ENCODE measurements at regions of chr16 and their contacts with region 1.

Region 1: GRCh38 chr16:74320707-74321106 is 24.1 kb downstream of the PSMD7 start:
- DNase-seq: no peak
- H3K4me3 ChIP-seq: no peak overlapping the region
- H3K27ac ChIP-seq: no peak overlapping the region
- H3K4me1 ChIP-seq: no peaks in the 10 kb centered on the region
- H3K27me3 ChIP-seq: no peaks in the 10 kb centered on the region
- CTCF ChIP-seq: no peak

Region 2: GRCh38 chr16:73831220-73831619 is 489.5 kb before region 1 on chr16:
- CTCF ChIA-PET with region 1: no interaction called
- POLR2A ChIA-PET with region 1: no interaction called
- intact Hi-C with region 1: no loop called
- DNase-seq: no peak
- H3K4me3 ChIP-seq: no peak overlapping the region
- H3K27ac ChIP-seq: no peak overlapping the region
- H3K4me1 ChIP-seq: no peaks in the 10 kb centered on the region
- H3K27me3 ChIP-seq: peaks cover 27% of the 10 kb centered on the region
- CTCF ChIP-seq: no peak

Region 3: DNA sequence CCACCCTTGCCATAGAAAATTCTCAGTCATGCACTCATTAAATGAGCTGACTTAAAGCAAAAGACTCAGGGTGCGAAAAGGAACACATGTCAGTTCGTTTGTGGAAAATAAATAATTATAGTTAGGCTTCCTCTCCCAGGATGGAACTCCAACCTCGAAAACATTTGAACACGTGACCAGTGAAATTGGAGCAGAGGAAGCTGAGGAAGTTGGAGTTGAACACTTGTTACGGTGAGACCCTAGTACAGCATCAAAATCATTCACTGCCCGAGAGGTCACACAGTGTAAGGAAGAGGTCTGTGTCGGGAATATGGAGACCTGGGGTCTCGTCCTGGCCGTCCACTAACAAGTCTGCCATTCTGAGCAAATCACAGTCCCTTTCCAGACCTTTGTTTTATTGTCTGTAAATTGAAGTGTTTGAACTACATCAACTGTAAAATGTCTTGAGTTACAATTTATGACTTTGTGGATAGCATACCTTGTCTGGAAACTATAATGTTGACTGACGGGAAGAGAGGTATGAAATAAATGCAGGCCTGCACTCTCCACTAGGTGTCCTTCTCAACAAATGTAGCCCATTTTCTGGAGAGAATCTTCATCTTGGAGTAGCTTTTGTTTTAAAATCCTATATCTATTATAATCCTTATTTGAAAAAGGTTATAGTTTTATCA is 16.4 kb before region 1 on chr16:
- CTCF ChIA-PET with region 1: interaction called, 10 read pairs
- POLR2A ChIA-PET with region 1: no interaction called
- intact Hi-C with region 1: no loop called
- DNase-seq: no peak
- H3K4me3 ChIP-seq: no peak overlapping the region
- H3K27ac ChIP-seq: no peak overlapping the region
- H3K4me1 ChIP-seq: no peaks in the 10 kb centered on the region
- H3K27me3 ChIP-seq: no peaks in the 10 kb centered on the region
- CTCF ChIP-seq: peak; percentile 58; the same call in 1 of the 2 replicates

Measured in PC-9 (cell line).